ENCODE measurements at regions of chr2 and their contacts with region 1.

Region 1: DNA sequence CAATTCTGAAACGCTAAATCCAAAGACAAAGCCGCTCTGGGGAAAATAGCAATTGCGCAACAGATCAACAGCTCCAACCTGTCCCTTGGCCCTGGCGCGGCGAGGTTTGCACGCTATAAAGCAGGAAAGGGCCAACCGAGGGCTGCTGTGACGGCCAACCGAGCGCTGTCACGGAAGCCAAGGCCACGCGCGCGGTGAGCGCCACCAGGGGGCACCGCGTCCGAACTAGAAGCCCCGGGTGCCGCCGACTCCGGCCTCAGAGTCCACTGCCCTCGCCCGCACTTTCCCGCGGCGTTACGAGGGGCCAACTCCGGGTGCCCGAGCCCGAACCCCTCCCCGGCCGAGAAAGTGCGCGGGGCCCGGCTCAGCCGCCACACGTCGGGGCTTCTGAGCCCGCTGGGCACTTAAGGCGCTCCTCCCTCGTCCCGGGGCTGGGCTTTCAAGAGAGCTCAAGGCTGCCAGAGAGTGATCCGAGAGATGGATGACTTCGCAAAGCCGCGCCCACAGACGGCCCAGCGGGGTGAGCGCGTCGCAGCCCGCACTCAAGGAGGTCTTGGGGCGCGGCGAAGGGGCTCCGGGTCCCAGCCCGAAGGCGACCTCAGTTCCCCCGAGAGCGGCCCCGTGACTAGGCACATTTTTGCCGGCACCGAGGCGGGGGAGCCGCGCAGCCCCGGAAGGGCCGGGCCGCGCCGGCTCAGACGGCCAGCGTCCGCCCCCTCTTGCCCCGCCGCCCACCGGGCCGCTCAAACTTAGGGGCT is 897 bp downstream of the NFE2L2 start:
- DNase-seq: peak; percentile 98 to 99
- H3K4me3 ChIP-seq: peak overlapping the region; percentile 91
- H3K4me3 Mint-ChIP-seq: peak overlapping the region; percentile 97
- H3K27ac Mint-ChIP-seq: peak overlapping the region; percentile 91
- H3K4me1 ChIP-seq: peaks cover 40% of the 10 kb centered on the region
- H3K4me1 Mint-ChIP-seq: peaks cover 21% of the 10 kb centered on the region
- H3K27me3 ChIP-seq: no peaks in the 10 kb centered on the region
- H3K27me3 Mint-ChIP-seq: no peaks in the 10 kb centered on the region
- CTCF ChIP-seq: peak; percentile 83 to 95

Region 2: DNA sequence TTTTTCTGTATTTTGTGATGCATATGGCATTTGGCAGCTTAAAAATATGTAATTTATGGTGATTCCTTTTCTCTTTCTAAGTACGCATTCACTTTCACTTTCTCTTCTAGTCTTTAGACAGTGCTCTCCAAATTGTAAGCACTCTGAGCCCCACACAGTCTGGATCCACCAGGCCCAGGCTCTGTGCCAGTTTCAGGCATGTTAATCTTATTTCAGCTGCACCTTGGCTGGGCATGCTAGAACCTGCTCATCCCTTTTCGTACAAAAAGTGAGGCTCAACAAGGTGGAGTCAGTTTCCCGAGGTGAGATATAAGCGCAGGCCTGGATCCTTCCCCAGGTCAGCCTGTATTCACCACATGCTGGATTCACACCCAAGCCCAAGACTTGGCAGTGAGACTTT is 790.5 kb before region 1 on chr2:
- CTCF ChIA-PET with region 1: no interaction called
- POLR2A ChIA-PET with region 1: no interaction called
- intact Hi-C with region 1: no loop called
- DNase-seq: no peak
- H3K4me3 ChIP-seq: no peak overlapping the region
- H3K4me3 Mint-ChIP-seq: no peak overlapping the region
- H3K27ac Mint-ChIP-seq: no peak overlapping the region
- H3K4me1 ChIP-seq: no peaks in the 10 kb centered on the region
- H3K4me1 Mint-ChIP-seq: no peaks in the 10 kb centered on the region
- H3K27me3 ChIP-seq: no peaks in the 10 kb centered on the region
- H3K27me3 Mint-ChIP-seq: peaks cover 27% of the 10 kb centered on the region
- CTCF ChIP-seq: no peak

Region 3: DNA sequence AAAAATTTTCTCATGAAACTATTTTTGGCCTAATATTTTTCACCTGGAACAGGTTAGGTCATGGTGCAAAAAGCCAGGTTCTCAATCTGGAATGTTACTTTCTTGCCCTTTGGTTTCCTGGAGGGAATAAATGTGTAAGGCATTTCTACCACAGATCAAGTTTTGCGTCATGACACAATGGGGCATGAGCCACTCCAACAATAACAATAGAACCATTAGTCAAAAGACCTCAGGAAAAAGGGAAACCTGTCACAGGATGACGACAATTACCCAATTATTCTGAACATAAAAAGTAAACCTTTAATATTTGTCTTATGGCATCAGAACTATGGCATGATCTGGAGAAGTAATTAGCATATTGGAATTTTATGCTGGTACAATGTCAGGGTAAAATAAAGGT is 139.3 kb before region 1 on chr2:
- CTCF ChIA-PET with region 1: no interaction called
- POLR2A ChIA-PET with region 1: no interaction called
- intact Hi-C with region 1: no loop called
- DNase-seq: no peak
- H3K4me3 ChIP-seq: no peak overlapping the region
- H3K4me3 Mint-ChIP-seq: no peak overlapping the region
- H3K27ac Mint-ChIP-seq: no peak overlapping the region
- H3K4me1 ChIP-seq: no peaks in the 10 kb centered on the region
- H3K4me1 Mint-ChIP-seq: no peaks in the 10 kb centered on the region
- H3K27me3 ChIP-seq: no peaks in the 10 kb centered on the region; the same call in 1 of the 2 replicates
- H3K27me3 Mint-ChIP-seq: peaks cover 4% of the 10 kb centered on the region
- CTCF ChIP-seq: no peak

Region 4: GRCh38 chr2:177212106-177212890 is 51.3 kb before region 1 on chr2 and contains the start of gene HNRNPA3:
- CTCF ChIA-PET with region 1: interaction called, 4 read pairs
- POLR2A ChIA-PET with region 1: interaction called, 22 read pairs
- intact Hi-C with region 1: loop called (anchors 1 kb)
- DNase-seq: peak; percentile 99
- H3K4me3 ChIP-seq: peak within 1 kb of the TSS; percentile 72
- H3K4me3 Mint-ChIP-seq: peak within 1 kb of the TSS; percentile 87
- H3K27ac Mint-ChIP-seq: peak within 1 kb of the TSS; percentile 99
- H3K4me1 ChIP-seq: peaks cover 22% of the 10 kb centered on the region
- H3K4me1 Mint-ChIP-seq: peaks cover 8% of the 10 kb centered on the region
- H3K27me3 ChIP-seq: no peaks in the 10 kb centered on the region
- H3K27me3 Mint-ChIP-seq: no peaks in the 10 kb centered on the region
- CTCF ChIP-seq: peak in 1 of 2 experiments; percentile 37
- total RNA-seq, gene HNRNPA3: 322 and 332 TPM in 2 replicates

Region 5: GRCh38 chr2:177242116-177242987 is 21.3 kb before region 1 on chr2:
- CTCF ChIA-PET with region 1: no interaction called
- POLR2A ChIA-PET with region 1: interaction called, 13 read pairs
- intact Hi-C with region 1: loop called (anchors 1 kb)
- DNase-seq: peak in 1 of 2 experiments; percentile 52
- H3K4me3 ChIP-seq: no peak overlapping the region
- H3K4me3 Mint-ChIP-seq: peak overlapping the region; percentile 62
- H3K27ac Mint-ChIP-seq: peak overlapping the region; percentile 91
- H3K4me1 ChIP-seq: peaks cover 47% of the 10 kb centered on the region
- H3K4me1 Mint-ChIP-seq: peaks cover 36% of the 10 kb centered on the region
- H3K27me3 ChIP-seq: no peaks in the 10 kb centered on the region
- H3K27me3 Mint-ChIP-seq: no peaks in the 10 kb centered on the region
- CTCF ChIP-seq: no peak

Region 6: GRCh38 chr2:177296040-177296439 is 32.4 kb after region 1 on chr2:
- CTCF ChIA-PET with region 1: interaction called, 5 read pairs
- POLR2A ChIA-PET with region 1: interaction called, 4 read pairs
- intact Hi-C with region 1: loop called (anchors 1 kb)
- DNase-seq: no peak
- H3K4me3 ChIP-seq: no peak overlapping the region
- H3K4me3 Mint-ChIP-seq: no peak overlapping the region
- H3K27ac Mint-ChIP-seq: no peak overlapping the region
- H3K4me1 ChIP-seq: peaks cover 3% of the 10 kb centered on the region; the same call in 1 of the 2 replicates
- H3K4me1 Mint-ChIP-seq: peaks cover 12% of the 10 kb centered on the region
- H3K27me3 ChIP-seq: no peaks in the 10 kb centered on the region
- H3K27me3 Mint-ChIP-seq: no peaks in the 10 kb centered on the region
- CTCF ChIP-seq: peak; percentile 19 to 21

Region 7: GRCh38 chr2:177392373-177393202 is 129.0 kb after region 1 on chr2 and contains the start of gene AGPS:
- CTCF ChIA-PET with region 1: no interaction called
- POLR2A ChIA-PET with region 1: interaction called, 14 read pairs
- intact Hi-C with region 1: loop called (anchors 5 kb)
- DNase-seq: peak; percentile 87 to 94
- H3K4me3 ChIP-seq: peak within 1 kb of the TSS; percentile 100
- H3K4me3 Mint-ChIP-seq: peak within 1 kb of the TSS; percentile 84
- H3K27ac Mint-ChIP-seq: peak within 1 kb of the TSS; percentile 82
- H3K4me1 ChIP-seq: peaks cover 51% of the 10 kb centered on the region
- H3K4me1 Mint-ChIP-seq: peaks cover 24% of the 10 kb centered on the region
- H3K27me3 ChIP-seq: no peaks in the 10 kb centered on the region
- H3K27me3 Mint-ChIP-seq: no peaks in the 10 kb centered on the region
- CTCF ChIP-seq: no peak
- total RNA-seq, gene AGPS: 102 and 105 TPM in 2 replicates

Region 8: DNA sequence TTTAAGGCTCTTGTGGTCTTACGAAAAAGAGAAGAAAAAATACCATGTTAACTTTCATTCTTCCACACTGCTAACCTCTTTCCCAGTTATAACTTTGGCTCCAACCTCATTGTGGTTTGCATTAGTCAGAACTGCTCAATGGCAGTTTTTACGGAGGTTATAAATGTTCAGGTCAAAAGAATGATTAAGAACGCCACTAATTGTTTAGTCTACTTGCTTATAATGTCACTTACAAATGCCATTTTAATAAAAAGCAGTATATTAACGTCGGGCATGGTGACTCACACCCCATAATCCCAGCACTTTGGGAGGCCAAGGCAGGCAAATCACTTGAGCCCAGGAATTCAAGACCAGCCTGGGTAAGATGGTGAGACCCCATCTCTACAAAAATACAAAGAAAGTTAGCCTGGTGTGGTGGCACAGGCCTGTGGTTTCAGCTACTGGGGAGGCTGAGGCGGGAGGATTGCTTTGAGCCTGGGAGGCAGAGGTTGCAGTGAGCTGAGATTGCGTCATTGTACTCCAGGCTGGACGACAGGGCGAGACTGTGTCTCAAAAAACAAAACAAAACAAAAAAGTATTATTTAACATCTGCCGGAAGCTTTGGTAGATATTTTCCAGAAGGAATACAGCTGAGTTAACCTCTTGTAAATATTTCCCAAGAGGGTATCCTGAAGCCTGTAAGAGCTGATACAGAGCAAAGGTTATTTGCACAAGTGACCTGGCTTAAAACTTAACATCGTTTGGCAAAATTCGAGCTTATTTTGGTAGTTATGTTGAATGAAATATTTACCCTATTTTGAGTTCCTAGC is 134.1 kb after region 1 on chr2:
- CTCF ChIA-PET with region 1: no interaction called
- POLR2A ChIA-PET with region 1: interaction called, 14 read pairs
- intact Hi-C with region 1: loop called (anchors 5 kb)
- DNase-seq: peak; percentile 60 to 63
- H3K4me3 ChIP-seq: no peak overlapping the region
- H3K4me3 Mint-ChIP-seq: peak overlapping the region; percentile 10
- H3K27ac Mint-ChIP-seq: peak overlapping the region; percentile 58
- H3K4me1 ChIP-seq: peaks cover 60% of the 10 kb centered on the region
- H3K4me1 Mint-ChIP-seq: peaks cover 34% of the 10 kb centered on the region
- H3K27me3 ChIP-seq: no peaks in the 10 kb centered on the region
- H3K27me3 Mint-ChIP-seq: no peaks in the 10 kb centered on the region
- CTCF ChIP-seq: no peak

Region 9: GRCh38 chr2:177419274-177419673 is 155.6 kb after region 1 on chr2:
- CTCF ChIA-PET with region 1: interaction called, 3 read pairs
- POLR2A ChIA-PET with region 1: interaction called, 3 read pairs
- intact Hi-C with region 1: loop called (anchors 2 kb)
- DNase-seq: no peak
- H3K4me3 ChIP-seq: no peak overlapping the region
- H3K4me3 Mint-ChIP-seq: no peak overlapping the region
- H3K27ac Mint-ChIP-seq: peak overlapping the region; percentile 53
- H3K4me1 ChIP-seq: peaks cover 34% of the 10 kb centered on the region
- H3K4me1 Mint-ChIP-seq: peaks cover 29% of the 10 kb centered on the region
- H3K27me3 ChIP-seq: no peaks in the 10 kb centered on the region
- H3K27me3 Mint-ChIP-seq: no peaks in the 10 kb centered on the region
- CTCF ChIP-seq: no peak